Psoas muscle (tissue), 8 donors: ENCODE measurements at regions of chr11 and their contacts with region 1.

Region 1: DNA sequence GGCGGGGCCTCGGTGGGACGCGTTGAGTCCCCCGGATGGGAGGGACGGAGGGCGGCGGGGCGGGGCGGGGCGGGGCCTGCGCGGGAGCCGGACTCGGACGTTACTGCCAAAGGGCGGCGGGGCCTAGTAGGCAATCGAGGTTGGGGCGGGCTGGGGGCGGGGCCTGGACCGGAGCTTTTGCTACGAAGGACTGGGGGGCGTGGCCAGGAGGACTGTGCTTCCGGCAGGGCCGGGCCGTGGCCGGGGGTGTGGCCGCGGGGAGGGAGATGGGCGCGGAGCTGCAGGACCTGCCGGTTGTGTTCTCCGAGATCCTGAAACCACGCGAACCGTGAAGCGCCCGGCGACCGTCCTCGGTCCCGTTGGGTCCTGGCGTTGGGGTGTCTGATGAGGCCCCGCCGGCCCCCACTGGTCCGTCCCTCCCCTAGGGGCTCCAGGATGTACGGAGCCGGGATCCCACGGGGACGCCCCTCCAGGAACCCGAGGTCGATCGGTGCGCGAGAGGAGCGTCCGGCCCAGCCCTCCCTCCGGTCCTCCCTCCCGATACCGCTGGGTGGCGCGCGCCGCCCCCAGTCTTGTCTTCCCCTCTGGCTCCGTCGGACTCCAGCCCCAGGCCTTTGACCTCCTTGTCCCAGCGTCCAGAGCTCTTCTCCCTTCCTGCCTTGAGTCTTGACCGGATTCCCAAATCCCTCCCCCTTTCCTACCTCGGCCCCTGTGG is 648 bp upstream of the NUDT8 start:
- DNase-seq: peak; percentile 99
- ATAC-seq: peak; percentile 89 to 92 (median 90)
- H3K4me3 ChIP-seq: peak overlapping the region; percentile 83
- H3K27ac ChIP-seq: peak overlapping the region; percentile 94
- H3K4me1 ChIP-seq: peaks cover 15% of the 10 kb centered on the region
- H3K27me3 ChIP-seq: no peaks in the 10 kb centered on the region
- CTCF ChIP-seq: peak; percentile 61

Region 2: DNA sequence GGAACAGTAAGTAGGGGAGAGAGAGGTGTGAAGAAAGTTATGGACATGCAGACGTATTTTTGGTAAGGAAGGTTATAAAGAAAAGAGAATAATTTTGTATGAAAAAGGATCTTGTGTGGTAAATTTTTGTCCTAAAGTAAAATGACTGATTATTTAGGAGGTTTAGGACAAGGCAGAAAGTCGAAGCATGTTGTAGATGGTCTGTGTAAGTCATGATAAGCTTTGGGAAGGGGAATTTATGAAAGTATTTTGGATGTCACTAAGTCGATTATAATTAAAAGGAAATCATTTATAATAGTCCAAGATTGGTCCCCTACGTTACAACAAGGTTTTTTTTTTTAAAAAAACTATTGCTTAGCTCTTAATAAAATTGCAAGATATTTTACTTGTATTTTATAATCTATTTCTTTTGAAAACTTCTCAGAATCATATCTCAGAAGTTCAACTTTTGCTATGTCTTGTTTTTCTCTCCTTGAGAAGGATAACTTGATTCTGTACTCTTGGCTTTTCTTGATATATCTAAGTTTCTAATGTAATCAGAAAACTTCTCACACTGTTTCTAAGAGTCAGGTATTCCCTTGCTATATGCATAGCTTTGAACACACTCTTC is 96.2 kb before region 1 on chr11:
- intact Hi-C with region 1: no loop called
- DNase-seq: no peak
- ATAC-seq: no peak
- H3K4me3 ChIP-seq: no peak overlapping the region
- H3K27ac ChIP-seq: no peak overlapping the region
- H3K4me1 ChIP-seq: no peaks in the 10 kb centered on the region
- H3K27me3 ChIP-seq: no peaks in the 10 kb centered on the region
- CTCF ChIP-seq: no peak

Region 3: DNA sequence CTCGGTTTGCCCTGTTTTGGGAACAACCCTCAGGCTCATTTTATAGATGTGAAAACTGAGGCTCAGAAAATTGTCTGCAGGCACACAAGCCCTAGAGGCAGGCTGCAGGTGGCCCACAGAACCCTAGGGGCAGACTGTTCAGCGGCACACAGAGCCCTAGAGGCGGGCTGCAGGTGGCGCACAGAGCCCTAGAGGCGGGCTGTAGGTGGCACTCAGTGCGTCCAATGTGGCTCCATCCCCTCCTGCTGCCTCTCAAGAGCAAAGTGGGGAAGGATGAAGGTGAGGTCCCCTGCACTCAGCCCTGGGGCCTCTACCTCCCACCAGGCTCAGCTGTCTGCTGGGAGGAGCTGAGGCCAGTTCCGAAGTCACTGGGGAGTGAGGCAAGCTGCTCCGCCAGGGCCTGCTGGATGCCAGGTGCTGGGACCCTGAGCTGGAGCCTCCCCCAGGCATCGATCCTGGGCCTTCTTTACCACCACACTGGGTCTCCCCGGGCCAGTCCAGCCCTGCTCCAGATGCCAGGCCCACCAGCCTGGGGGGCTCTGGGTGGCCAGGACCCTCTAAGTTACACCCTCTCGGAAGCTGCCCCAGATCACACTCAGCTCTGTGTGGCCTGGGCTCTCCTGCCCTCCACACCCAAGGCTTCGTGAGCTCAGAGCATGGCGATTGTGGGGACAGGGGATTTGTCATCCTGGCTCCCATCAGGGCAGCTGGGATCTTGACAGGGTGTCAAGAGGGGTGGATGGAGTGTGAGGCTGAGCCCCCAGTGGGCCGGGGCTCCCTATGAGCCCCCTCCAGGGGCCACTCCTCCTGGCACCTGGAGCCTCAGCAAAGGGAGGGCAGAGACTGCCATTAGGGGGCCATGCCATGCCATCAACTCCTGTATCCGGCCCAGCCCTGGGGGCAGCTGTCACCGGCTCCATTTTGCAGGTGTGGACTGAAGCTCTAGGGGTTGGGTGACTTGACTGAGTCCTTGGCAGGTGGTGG is 18.0 kb after region 1 on chr11:
- intact Hi-C with region 1: no loop called
- DNase-seq: no peak
- ATAC-seq: no peak
- H3K4me3 ChIP-seq: no peak overlapping the region
- H3K27ac ChIP-seq: no peak overlapping the region
- H3K4me1 ChIP-seq: no peaks in the 10 kb centered on the region
- H3K27me3 ChIP-seq: peaks cover 0 to 24% (median 6%) of the 10 kb centered on the region in 3 donors
- CTCF ChIP-seq: no peak

Region 4: DNA sequence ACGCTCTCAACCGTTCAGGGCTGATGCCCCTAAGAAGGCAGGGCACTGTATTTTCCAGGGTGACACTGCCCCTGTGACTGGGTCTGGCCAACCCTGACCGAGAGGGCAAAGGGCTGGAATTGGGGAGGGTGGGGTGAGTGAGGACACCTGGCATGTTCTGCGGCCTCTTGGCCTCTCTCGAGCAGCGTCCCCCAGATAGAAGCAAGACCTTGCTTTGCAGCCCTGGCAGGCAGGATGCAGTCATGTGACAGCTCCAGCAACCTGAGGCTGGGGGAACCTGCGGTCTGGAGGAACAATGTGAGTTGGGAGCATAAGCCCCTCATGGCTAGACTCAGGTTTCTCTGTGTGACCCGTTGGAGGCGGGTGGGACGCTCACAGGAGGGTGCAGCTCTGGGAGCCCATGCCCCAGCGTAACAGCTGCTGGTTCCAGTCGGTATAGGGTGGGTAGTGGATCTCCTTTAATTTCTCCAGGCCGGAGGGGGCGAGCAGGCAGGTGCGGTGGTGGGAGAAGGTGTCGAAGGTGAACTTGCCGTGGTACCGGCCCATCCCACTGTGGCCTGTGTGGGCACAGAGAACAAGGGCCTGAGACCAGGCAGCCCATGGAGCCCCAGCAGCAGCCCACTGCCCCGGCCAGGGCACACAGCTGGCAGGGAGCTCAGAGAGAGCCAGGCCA is 32.6 kb after region 1 on chr11:
- intact Hi-C with region 1: loop called (anchors 5 kb)
- DNase-seq: no peak
- ATAC-seq: no peak
- H3K4me3 ChIP-seq: no peak overlapping the region
- H3K27ac ChIP-seq: no peak overlapping the region
- H3K4me1 ChIP-seq: no peaks in the 10 kb centered on the region
- H3K27me3 ChIP-seq: no peaks in the 10 kb centered on the region
- CTCF ChIP-seq: no peak